IMR-90 (cell line): ENCODE measurements at regions of chr5 and their contacts with region 1.

Region 1: GRCh38 chr5:122392824-122393223 is 80.8 kb downstream of the SNCAIP start:
- DNase-seq: peak; percentile 75
- ATAC-seq: no peak
- H3K4me3 ChIP-seq: no peak overlapping the region
- H3K27ac ChIP-seq: no peak overlapping the region; the same call in 1 of the 2 replicates
- H3K4me1 ChIP-seq: peaks cover 8% of the 10 kb centered on the region
- H3K27me3 ChIP-seq: no peaks in the 10 kb centered on the region
- CTCF ChIP-seq: no peak
- POLR2A ChIP-seq: no peak
- RAD21 ChIP-seq: no peak

Region 2: DNA sequence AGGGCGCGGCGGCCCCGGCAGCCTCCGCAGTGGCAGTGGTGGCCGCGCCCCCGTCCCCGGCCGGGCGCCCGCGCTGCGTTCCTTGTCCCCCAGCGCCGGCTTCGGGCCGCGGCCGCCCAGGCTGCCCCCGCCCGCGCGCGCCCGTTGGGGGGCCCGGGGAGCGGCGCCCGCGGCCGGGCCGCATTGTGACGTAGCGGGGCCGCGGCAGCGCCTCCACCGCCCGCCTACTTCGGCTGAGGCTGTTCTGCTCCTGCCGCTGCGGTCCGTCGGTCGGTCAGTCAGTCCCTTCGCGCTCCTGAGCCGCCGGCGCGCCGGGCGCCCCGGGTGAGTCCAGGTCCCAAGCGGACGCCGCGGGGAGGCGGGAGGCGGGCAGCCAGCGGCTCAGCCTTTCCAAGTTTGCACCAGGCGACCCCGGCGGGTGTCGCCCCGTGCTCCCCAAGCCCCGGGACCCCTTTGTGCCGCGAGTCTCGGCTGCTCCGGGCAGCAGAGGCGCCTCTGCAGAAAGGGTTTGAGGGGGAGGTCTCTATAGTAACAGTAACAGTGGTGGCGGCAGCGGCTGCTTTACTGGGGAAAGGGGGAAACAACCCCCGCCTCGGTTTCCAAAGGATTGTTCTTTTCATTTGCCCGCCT is 80.7 kb before region 1 on chr5 and contains the start of gene SNCAIP:
- CTCF ChIA-PET with region 1: no interaction called
- POLR2A ChIA-PET with region 1: no interaction called
- dilution Hi-C with region 1: no loop called
- in situ Hi-C with region 1: no loop called
- intact Hi-C with region 1: loop called (anchors 5 kb)
- DNase-seq: peak; percentile 64
- ATAC-seq: peak; percentile 89
- H3K4me3 ChIP-seq: peak within 1 kb of the TSS; percentile 54
- H3K27ac ChIP-seq: peak within 1 kb of the TSS; percentile 53
- H3K4me1 ChIP-seq: peaks cover 4% of the 10 kb centered on the region; the same call in 1 of the 2 replicates
- H3K27me3 ChIP-seq: no peaks in the 10 kb centered on the region
- CTCF ChIP-seq: no peak
- POLR2A ChIP-seq: no peak
- RAD21 ChIP-seq: no peak
- total RNA-seq, gene SNCAIP: 19.0 and 22.5 TPM in 2 replicates